CD4-positive, alpha-beta memory T cell (primary cell): ENCODE measurements at regions of chr11 and their contacts with region 1.

Region 1: GRCh38 chr11:117327567-117328374 is at the start of gene CEP164:
- DNase-seq: peak; percentile 93 to 97 (median 95)
- H3K4me3 ChIP-seq: peak within 1 kb of the TSS; percentile 76 to 93
- H3K4me3 Mint-ChIP-seq: peak within 1 kb of the TSS in 6 of 8 donors; percentile 6 to 60 (median 42)
- H3K27ac ChIP-seq: peak within 1 kb of the TSS; percentile 85
- H3K27ac Mint-ChIP-seq: peak within 1 kb of the TSS in 3 of 7 donors; percentile 10 to 59 (median 53)
- H3K4me1 ChIP-seq: peaks cover 19% of the 10 kb centered on the region
- H3K4me1 Mint-ChIP-seq: peaks cover 0 to 11% (median 9%) of the 10 kb centered on the region in 4 donors
- H3K27me3 ChIP-seq: no peaks in the 10 kb centered on the region
- H3K27me3 Mint-ChIP-seq: no peaks in the 10 kb centered on the region
- total RNA-seq, gene CEP164: 40.8 to 42.5 TPM

Region 2: GRCh38 chr11:117232092-117232878 is 95.5 kb before region 1 on chr11 and contains the start of gene RNF214:
- CTCF ChIA-PET with region 1: interaction called, 28 read pairs
- POLR2A ChIA-PET with region 1: interaction called, 68 read pairs
- intact Hi-C with region 1: loop called (anchors 1 kb)
- DNase-seq: peak; percentile 65 to 83 (median 75)
- H3K4me3 ChIP-seq: peak within 1 kb of the TSS; percentile 87 to 93
- H3K4me3 Mint-ChIP-seq: peak within 1 kb of the TSS; percentile 97 to 100 (median 99)
- H3K27ac ChIP-seq: peak within 1 kb of the TSS; percentile 90
- H3K27ac Mint-ChIP-seq: peak within 1 kb of the TSS; percentile 95 to 100 (median 99)
- H3K4me1 ChIP-seq: peaks cover 47% of the 10 kb centered on the region
- H3K4me1 Mint-ChIP-seq: peaks cover 27 to 62% (median 49%) of the 10 kb centered on the region in 4 donors
- H3K27me3 ChIP-seq: no peaks in the 10 kb centered on the region
- H3K27me3 Mint-ChIP-seq: no peaks in the 10 kb centered on the region
- total RNA-seq, gene RNF214: 41.8 to 50.1 TPM

Region 3: GRCh38 chr11:117281159-117281558 is 46.6 kb before region 1 on chr11:
- CTCF ChIA-PET with region 1: interaction called, 4 read pairs
- POLR2A ChIA-PET with region 1: interaction called, 17 read pairs
- intact Hi-C with region 1: loop called (anchors 2 kb)
- DNase-seq: no peak
- H3K4me3 ChIP-seq: peak overlapping the region in 1 of 2 donors; percentile 58
- H3K4me3 Mint-ChIP-seq: peak overlapping the region; percentile 69 to 95 (median 90)
- H3K27ac ChIP-seq: peak overlapping the region; percentile 17
- H3K27ac Mint-ChIP-seq: peak overlapping the region in 6 of 7 donors; percentile 39 to 97 (median 86)
- H3K4me1 ChIP-seq: peaks cover 58% of the 10 kb centered on the region
- H3K4me1 Mint-ChIP-seq: peaks cover 41 to 81% (median 57%) of the 10 kb centered on the region in 4 donors
- H3K27me3 ChIP-seq: no peaks in the 10 kb centered on the region
- H3K27me3 Mint-ChIP-seq: no peaks in the 10 kb centered on the region

Region 4: DNA sequence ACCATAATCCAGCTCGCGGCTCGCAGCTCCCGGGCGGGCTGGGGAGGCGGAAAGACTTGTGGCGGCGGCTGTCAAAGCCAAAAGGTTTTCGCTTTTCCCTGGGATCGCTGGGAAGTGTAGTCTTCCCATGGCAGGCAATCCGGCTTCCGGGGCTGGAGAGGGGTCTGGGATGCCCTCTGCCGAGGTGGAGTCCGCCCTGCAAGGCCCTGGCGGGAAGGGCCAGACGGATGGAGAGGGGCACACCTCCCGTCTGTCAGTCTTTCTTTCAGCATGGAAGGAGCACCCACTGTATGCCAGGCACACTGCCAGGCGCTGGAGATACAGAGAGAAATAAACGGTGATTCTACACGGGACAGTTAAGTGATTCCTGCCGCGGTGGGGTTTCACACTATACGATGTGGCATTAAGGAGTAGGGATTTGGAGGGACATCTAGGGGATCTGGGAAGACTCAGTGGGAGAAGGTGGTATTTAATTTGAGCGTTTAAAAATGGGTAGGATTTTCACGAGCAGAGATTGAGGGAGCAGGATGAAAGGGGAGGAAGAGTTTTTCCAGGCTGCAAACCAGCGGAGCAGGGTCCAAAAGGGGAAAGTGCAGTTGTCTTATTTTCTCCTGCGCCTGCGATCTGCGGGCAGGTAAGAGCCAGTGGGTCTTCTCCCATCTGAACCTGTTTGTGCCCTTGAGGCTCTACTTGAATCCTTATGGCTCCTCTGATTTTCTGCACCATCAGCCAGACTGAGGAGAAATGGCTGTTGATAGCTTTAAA is 11.4 kb before region 1 on chr11 and contains the start of gene BACE1:
- CTCF ChIA-PET with region 1: interaction called, 5 read pairs
- POLR2A ChIA-PET with region 1: interaction called, 20 read pairs
- intact Hi-C with region 1: no loop called
- DNase-seq: peak in 3 of 5 donors; percentile 5 to 17 (median 11)
- H3K4me3 ChIP-seq: peak within 1 kb of the TSS; percentile 39 to 63
- H3K4me3 Mint-ChIP-seq: peak within 1 kb of the TSS; percentile 86 to 92 (median 89)
- H3K27ac ChIP-seq: peak within 1 kb of the TSS; percentile 26
- H3K27ac Mint-ChIP-seq: peak within 1 kb of the TSS in 5 of 7 donors; percentile 39 to 89 (median 68)
- H3K4me1 ChIP-seq: peaks cover 17% of the 10 kb centered on the region
- H3K4me1 Mint-ChIP-seq: peaks cover 4 to 19% (median 12%) of the 10 kb centered on the region in 4 donors
- H3K27me3 ChIP-seq: peaks cover 7% of the 10 kb centered on the region
- H3K27me3 Mint-ChIP-seq: peaks cover 3 to 7% of the 10 kb centered on the region in 2 donors
- total RNA-seq, gene BACE1: 2.7 to 2.9 TPM

Region 5: GRCh38 chr11:117547195-117547850 is 219.6 kb after region 1 on chr11:
- CTCF ChIA-PET with region 1: no interaction called
- POLR2A ChIA-PET with region 1: no interaction called
- intact Hi-C with region 1: no loop called
- DNase-seq: no peak
- H3K4me3 ChIP-seq: no peak overlapping the region
- H3K4me3 Mint-ChIP-seq: no peak overlapping the region
- H3K27ac ChIP-seq: no peak overlapping the region
- H3K27ac Mint-ChIP-seq: no peak overlapping the region
- H3K4me1 ChIP-seq: no peaks in the 10 kb centered on the region
- H3K4me1 Mint-ChIP-seq: no peaks in the 10 kb centered on the region
- H3K27me3 ChIP-seq: no peaks in the 10 kb centered on the region
- H3K27me3 Mint-ChIP-seq: peaks cover 4 to 21% of the 10 kb centered on the region in 2 donors